ENCODE measurements at regions of chr10 and their contacts with region 1.

Region 1: GRCh38 chr10:28991326-28992270 is 297.3 kb upstream of the LYZL1 start:
- DNase-seq: peak; percentile 50
- ATAC-seq: peak; percentile 85
- H3K4me3 ChIP-seq: no peak overlapping the region
- H3K27ac ChIP-seq: no peak overlapping the region
- H3K4me1 ChIP-seq: peaks cover 19% of the 10 kb centered on the region
- H3K27me3 ChIP-seq: no peaks in the 10 kb centered on the region
- CTCF ChIP-seq: peak; percentile 92
- EP300 ChIP-seq: no peak
- POLR2A ChIP-seq: no peak
- RAD21 ChIP-seq: peak; percentile 81

Region 2: GRCh38 chr10:28663576-28664313 is 327.9 kb before region 1 on chr10:
- CTCF ChIA-PET with region 1: interaction called, 24 read pairs
- POLR2A ChIA-PET with region 1: no interaction called
- in situ Hi-C with region 1: no loop called
- intact Hi-C with region 1: loop called (anchors 1 kb)
- DNase-seq: peak; percentile 77
- ATAC-seq: peak; percentile 94
- H3K4me3 ChIP-seq: no peak overlapping the region
- H3K27ac ChIP-seq: no peak overlapping the region
- H3K4me1 ChIP-seq: peaks cover 18% of the 10 kb centered on the region
- H3K27me3 ChIP-seq: peaks cover 4 to 34% of the 10 kb centered on the region in 2 experiments
- CTCF ChIP-seq: peak; percentile 91
- EP300 ChIP-seq: no peak
- POLR2A ChIP-seq: no peak
- RAD21 ChIP-seq: peak; percentile 90

Region 3: DNA sequence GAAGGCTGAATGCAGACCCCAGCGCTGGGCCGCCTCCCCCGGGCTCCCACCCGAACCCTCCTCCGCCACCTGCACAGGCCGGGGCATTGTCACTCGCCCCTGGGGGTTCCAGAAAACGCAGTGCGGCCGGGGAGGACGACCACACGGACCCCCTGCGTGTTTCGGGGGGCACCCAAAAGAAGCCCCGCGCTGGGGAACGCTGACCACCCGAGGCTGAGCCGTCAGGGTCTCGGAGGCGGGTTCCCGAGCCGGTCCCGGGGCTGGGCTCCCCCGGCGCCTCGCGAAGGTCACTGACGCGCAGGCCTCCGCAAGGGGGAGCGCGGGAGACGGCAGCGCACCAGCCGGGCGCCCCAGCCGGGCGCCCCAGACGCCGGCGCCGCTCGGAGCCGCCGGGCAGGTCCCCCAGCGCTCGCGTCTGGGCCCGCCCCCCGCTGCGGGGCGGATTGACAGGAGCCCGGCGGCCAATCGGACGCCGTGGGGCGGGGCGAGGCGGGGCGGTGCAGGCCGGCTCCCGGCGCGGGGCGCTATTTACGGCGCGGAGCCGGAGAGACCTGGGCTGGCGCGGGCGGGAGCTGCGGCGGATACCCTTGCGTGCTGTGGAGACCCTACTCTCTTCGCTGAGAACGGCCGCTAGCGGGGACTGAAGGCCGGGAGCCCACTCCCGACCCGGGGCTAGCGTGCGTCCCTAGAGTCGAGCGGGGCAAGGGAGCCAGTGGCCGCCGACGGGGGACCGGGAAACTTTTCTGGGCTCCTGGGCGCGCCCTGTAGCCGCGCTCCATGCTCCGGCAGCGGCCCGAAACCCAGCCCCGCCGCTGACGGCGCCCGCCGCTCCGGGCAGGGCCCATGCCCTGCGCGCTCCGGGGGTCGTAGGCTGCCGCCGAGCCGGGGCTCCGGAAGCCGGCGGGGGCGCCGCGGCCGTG is 314.4 kb before region 1 on chr10 and contains the start of gene BAMBI:
- CTCF ChIA-PET with region 1: interaction called, 13 read pairs
- POLR2A ChIA-PET with region 1: interaction called, 3 read pairs
- in situ Hi-C with region 1: loop called (anchors 5 kb)
- intact Hi-C with region 1: loop called (anchors 1 kb)
- DNase-seq: peak; percentile 81
- ATAC-seq: peak; percentile 93
- H3K4me3 ChIP-seq: peak within 1 kb of the TSS; percentile 93 to 99 (median 99)
- H3K27ac ChIP-seq: peak within 1 kb of the TSS; percentile 71
- H3K4me1 ChIP-seq: peaks cover 30% of the 10 kb centered on the region
- H3K27me3 ChIP-seq: peaks cover 0 to 31% of the 10 kb centered on the region in 2 experiments; a peak in 4 of 5 replicates
- CTCF ChIP-seq: peak; percentile 73
- EP300 ChIP-seq: peak in 1 of 2 experiments; percentile 5; a peak in 1 of 4 replicates
- POLR2A ChIP-seq: peak; percentile 97 to 98
- RAD21 ChIP-seq: peak; percentile 97
- total RNA-seq, gene BAMBI: 13.2 and 23.6 TPM in 2 replicates

Region 4: GRCh38 chr10:28734941-28735759 is 256.4 kb before region 1 on chr10:
- CTCF ChIA-PET with region 1: no interaction called
- POLR2A ChIA-PET with region 1: no interaction called
- in situ Hi-C with region 1: no loop called
- intact Hi-C with region 1: loop called (anchors 5 kb)
- DNase-seq: peak; percentile 95
- ATAC-seq: peak; percentile 97
- H3K4me3 ChIP-seq: no peak overlapping the region
- H3K27ac ChIP-seq: no peak overlapping the region
- H3K4me1 ChIP-seq: peaks cover 33% of the 10 kb centered on the region
- H3K27me3 ChIP-seq: no peaks in the 10 kb centered on the region; a peak in 1 of 5 replicates
- CTCF ChIP-seq: no peak
- EP300 ChIP-seq: no peak; a peak in 1 of 4 replicates
- POLR2A ChIP-seq: no peak
- RAD21 ChIP-seq: no peak

Region 5: GRCh38 chr10:28796606-28797512 is 194.7 kb before region 1 on chr10:
- CTCF ChIA-PET with region 1: no interaction called
- POLR2A ChIA-PET with region 1: no interaction called
- in situ Hi-C with region 1: no loop called
- intact Hi-C with region 1: loop called (anchors 5 kb)
- DNase-seq: no peak
- ATAC-seq: no peak
- H3K4me3 ChIP-seq: no peak overlapping the region
- H3K27ac ChIP-seq: no peak overlapping the region
- H3K4me1 ChIP-seq: peaks cover 27% of the 10 kb centered on the region
- H3K27me3 ChIP-seq: peaks cover 3% of the 10 kb centered on the region in 2 experiments; a peak in 2 of 5 replicates
- CTCF ChIP-seq: no peak
- EP300 ChIP-seq: no peak
- POLR2A ChIP-seq: no peak
- RAD21 ChIP-seq: no peak

Region 6: GRCh38 chr10:28875549-28876081 is 116.0 kb before region 1 on chr10:
- CTCF ChIA-PET with region 1: no interaction called
- POLR2A ChIA-PET with region 1: no interaction called
- in situ Hi-C with region 1: no loop called
- intact Hi-C with region 1: loop called (anchors 5 kb)
- DNase-seq: peak; percentile 73
- ATAC-seq: peak; percentile 72
- H3K4me3 ChIP-seq: peak overlapping the region; percentile 7 to 51 (median 35); a peak in 4 of 6 replicates
- H3K27ac ChIP-seq: no peak overlapping the region
- H3K4me1 ChIP-seq: peaks cover 72% of the 10 kb centered on the region
- H3K27me3 ChIP-seq: peaks cover 0 to 5% of the 10 kb centered on the region in 2 experiments; a peak in 3 of 5 replicates
- CTCF ChIP-seq: 0 out of 2 replicates have a peak, but pooled peaks have one; percentile 13
- EP300 ChIP-seq: no peak; a peak in 1 of 4 replicates
- POLR2A ChIP-seq: no peak
- RAD21 ChIP-seq: no peak

Region 7: DNA sequence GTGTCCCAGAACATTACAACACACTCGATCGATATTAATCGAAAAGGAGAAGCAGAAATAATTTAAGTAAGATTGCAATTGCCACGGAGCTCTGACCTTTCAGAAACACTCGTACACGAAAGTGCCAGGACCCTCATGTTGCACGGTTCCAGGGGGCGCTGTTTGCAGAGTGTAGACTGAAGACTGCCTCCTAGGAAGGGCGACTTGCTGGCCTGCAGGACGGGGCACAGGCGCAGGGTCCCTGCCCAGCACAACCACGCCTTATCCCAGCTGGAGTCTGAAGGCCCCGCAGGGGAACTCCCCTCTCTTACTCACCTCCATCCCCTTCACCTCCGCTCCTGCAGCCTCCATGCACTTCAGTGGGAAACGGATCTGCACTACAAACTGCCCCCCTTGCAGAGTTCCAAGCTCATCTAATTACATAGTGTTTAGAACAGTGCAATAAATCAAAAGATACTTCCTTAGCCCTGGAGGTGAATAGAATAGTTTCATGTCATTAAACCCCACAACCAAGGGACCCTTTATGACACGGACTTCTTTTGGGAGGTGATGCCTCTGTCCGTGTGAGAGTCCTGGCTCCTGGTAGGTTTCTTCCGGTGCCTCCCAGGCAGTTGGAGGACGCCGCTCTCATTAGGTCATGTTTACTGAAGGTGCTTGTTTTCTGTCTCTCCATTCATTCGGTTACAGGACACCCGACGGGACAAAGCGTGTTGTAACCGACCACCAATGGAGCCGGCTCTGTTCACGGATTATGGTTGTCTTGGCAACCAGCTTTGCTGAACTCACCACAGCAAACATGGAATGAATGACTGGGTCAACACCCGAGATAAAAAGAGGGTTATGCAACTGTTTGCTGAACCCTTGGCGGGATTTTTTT is 52.1 kb before region 1 on chr10:
- CTCF ChIA-PET with region 1: interaction called, 6 read pairs
- POLR2A ChIA-PET with region 1: interaction called, 3 read pairs
- in situ Hi-C with region 1: no loop called
- intact Hi-C with region 1: loop called (anchors 1 kb)
- DNase-seq: peak; percentile 100
- ATAC-seq: peak; percentile 97
- H3K4me3 ChIP-seq: peak overlapping the region; percentile 53 to 80 (median 67)
- H3K27ac ChIP-seq: peak overlapping the region; percentile 99
- H3K4me1 ChIP-seq: peaks cover 56% of the 10 kb centered on the region
- H3K27me3 ChIP-seq: no peaks in the 10 kb centered on the region; a peak in 1 of 5 replicates
- CTCF ChIP-seq: peak; percentile 92
- EP300 ChIP-seq: peak; percentile 99 to 100
- POLR2A ChIP-seq: peak; percentile 66 to 85
- RAD21 ChIP-seq: peak; percentile 60

Region 8: GRCh38 chr10:29174335-29174734 is 182.7 kb after region 1 on chr10:
- CTCF ChIA-PET with region 1: no interaction called
- POLR2A ChIA-PET with region 1: no interaction called
- in situ Hi-C with region 1: no loop called
- intact Hi-C with region 1: no loop called
- DNase-seq: no peak
- ATAC-seq: no peak
- H3K4me3 ChIP-seq: no peak overlapping the region
- H3K27ac ChIP-seq: no peak overlapping the region
- H3K4me1 ChIP-seq: peaks cover 9% of the 10 kb centered on the region
- H3K27me3 ChIP-seq: no peaks in the 10 kb centered on the region
- CTCF ChIP-seq: no peak
- EP300 ChIP-seq: no peak
- POLR2A ChIP-seq: no peak
- RAD21 ChIP-seq: no peak

Measured in HepG2 (cell line).